ENCODE measurements at regions of chr15 and their contacts with region 1.

Region 1: DNA sequence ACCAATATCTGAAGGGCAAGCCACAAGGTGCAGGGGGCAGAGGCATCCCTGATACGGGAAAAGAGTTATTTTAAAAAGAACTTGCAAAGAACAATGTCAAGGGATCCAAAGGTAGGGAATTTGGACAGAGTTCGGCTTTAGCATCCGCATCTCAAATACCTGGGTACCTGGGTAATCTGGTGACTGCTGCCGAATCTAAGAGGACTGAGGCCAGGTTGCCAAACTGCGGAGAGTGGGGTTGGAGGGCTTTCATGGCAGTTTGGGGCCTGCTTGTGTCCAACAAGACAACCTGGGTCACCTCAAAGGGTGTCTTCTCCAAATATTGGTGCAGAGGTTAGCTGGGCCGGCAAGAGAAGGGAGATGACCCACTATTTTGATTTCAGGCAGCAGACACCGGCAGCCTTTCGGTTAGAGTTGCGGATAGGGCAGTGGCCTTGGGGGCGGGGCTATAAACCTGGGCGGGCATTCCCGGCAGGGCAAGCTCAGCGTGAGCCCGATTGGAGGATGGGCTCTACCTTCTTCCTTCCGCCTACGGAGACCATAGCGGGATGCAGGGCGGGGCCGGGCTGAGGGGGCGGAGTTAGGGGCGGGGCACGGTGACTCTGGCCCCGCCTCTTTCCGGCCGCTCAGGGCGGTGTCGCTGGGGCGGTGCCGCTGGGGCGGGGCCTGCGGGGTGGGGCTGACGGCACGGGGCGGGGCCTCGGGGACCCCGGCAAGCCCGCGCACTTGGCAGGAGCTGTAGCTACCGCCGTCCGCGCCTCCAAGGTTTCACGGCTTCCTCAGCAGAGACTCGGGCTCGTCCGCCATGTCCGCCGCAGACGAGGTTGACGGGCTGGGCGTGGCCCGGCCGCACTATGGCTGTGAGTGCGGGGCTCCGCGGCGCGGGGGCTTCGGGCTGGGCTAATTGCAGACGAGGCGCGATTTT is at the start of gene IQGAP1:
- DNase-seq: peak; percentile 92 to 97 (median 95)
- H3K4me3 ChIP-seq: peak within 1 kb of the TSS; percentile 70 to 85
- H3K4me3 Mint-ChIP-seq: peak within 1 kb of the TSS; percentile 89 to 96 (median 93)
- H3K27ac ChIP-seq: peak within 1 kb of the TSS; percentile 84
- H3K27ac Mint-ChIP-seq: peak within 1 kb of the TSS; percentile 93 to 98 (median 96)
- H3K4me1 ChIP-seq: peaks cover 42% of the 10 kb centered on the region
- H3K4me1 Mint-ChIP-seq: peaks cover 36 to 54% (median 48%) of the 10 kb centered on the region in 4 donors
- H3K27me3 ChIP-seq: no peaks in the 10 kb centered on the region
- H3K27me3 Mint-ChIP-seq: no peaks in the 10 kb centered on the region
- total RNA-seq, gene IQGAP1: 128 to 132 TPM

Region 2: DNA sequence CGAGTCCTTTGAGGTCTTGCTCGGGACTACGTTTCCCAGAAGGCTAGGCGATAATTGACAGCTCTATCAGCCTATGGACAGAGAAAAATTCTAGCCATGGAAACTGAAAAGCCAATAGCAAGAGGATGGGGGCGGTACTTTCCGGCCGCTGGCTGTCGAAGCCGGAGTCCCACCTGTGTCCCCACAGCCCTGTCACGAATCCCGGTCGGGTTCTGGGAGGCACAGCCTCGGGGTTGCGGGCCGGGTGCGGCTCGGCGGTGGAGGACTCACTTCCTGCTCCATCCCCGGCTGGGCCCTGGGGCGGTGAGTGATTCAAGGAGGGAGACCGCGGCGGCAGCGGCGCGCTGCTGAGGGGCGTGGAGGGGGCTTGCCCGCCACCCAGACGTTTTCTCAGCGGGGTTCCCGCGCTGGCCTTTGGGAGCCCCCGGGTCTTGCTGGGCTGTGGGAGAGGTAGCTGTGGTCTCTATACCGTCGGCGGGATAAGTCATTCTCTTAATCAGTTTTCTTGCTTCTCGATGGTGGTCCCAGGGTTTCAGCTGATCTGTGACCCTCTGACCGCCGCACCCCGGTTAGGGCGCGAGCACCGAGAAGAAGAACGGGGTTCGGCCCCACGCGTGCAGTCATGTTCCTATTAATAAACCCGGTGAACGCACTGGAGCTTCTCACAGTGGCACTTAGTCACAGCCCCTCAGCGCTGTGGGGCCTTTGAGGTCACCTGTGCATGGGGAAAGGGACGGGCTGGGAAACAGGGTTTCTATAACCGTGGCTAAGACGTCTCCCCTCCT is 35.5 kb before region 1 on chr15 and contains the start of gene ZNF774:
- CTCF ChIA-PET with region 1: no interaction called
- POLR2A ChIA-PET with region 1: interaction called, 5 read pairs
- intact Hi-C with region 1: loop called (anchors 5 kb)
- DNase-seq: peak; percentile 92 to 95 (median 94)
- H3K4me3 ChIP-seq: peak within 1 kb of the TSS; percentile 50 to 79
- H3K4me3 Mint-ChIP-seq: peak within 1 kb of the TSS; percentile 83 to 95 (median 90)
- H3K27ac ChIP-seq: peak within 1 kb of the TSS; percentile 18
- H3K27ac Mint-ChIP-seq: peak within 1 kb of the TSS; percentile 24 to 85 (median 75)
- H3K4me1 ChIP-seq: peaks cover 10% of the 10 kb centered on the region
- H3K4me1 Mint-ChIP-seq: peaks cover 8 to 20% (median 14%) of the 10 kb centered on the region in 4 donors
- H3K27me3 ChIP-seq: no peaks in the 10 kb centered on the region
- H3K27me3 Mint-ChIP-seq: peaks cover 0 to 1% of the 10 kb centered on the region in 2 donors
- total RNA-seq, gene ZNF774: 0.78 to 0.81 TPM

Region 3: GRCh38 chr15:90376789-90377188 is 11.0 kb before region 1 on chr15:
- CTCF ChIA-PET with region 1: interaction called, 6 read pairs
- POLR2A ChIA-PET with region 1: interaction called, 70 read pairs
- intact Hi-C with region 1: loop called (anchors 1 kb)
- DNase-seq: peak; percentile 78 to 83 (median 80)
- H3K4me3 ChIP-seq: peak overlapping the region in 1 of 2 donors; percentile 11
- H3K4me3 Mint-ChIP-seq: peak overlapping the region; percentile 58 to 86 (median 73)
- H3K27ac ChIP-seq: no peak overlapping the region
- H3K27ac Mint-ChIP-seq: peak overlapping the region; percentile 41 to 95 (median 65)
- H3K4me1 ChIP-seq: peaks cover 46% of the 10 kb centered on the region
- H3K4me1 Mint-ChIP-seq: peaks cover 21 to 53% (median 43%) of the 10 kb centered on the region in 4 donors
- H3K27me3 ChIP-seq: no peaks in the 10 kb centered on the region
- H3K27me3 Mint-ChIP-seq: no peaks in the 10 kb centered on the region

Region 4: GRCh38 chr15:90400406-90401314 is 12.9 kb after region 1 on chr15:
- CTCF ChIA-PET with region 1: interaction called, 15 read pairs
- POLR2A ChIA-PET with region 1: interaction called, 92 read pairs
- intact Hi-C with region 1: loop called (anchors 1 kb)
- DNase-seq: peak; percentile 79 to 91 (median 88)
- H3K4me3 ChIP-seq: peak overlapping the region in 1 of 2 donors; percentile 3
- H3K4me3 Mint-ChIP-seq: peak overlapping the region; percentile 75 to 88 (median 80)
- H3K27ac ChIP-seq: peak overlapping the region; percentile 93
- H3K27ac Mint-ChIP-seq: peak overlapping the region; percentile 97 to 100 (median 99)
- H3K4me1 ChIP-seq: peaks cover 72% of the 10 kb centered on the region
- H3K4me1 Mint-ChIP-seq: peaks cover 49 to 76% (median 60%) of the 10 kb centered on the region in 4 donors
- H3K27me3 ChIP-seq: no peaks in the 10 kb centered on the region
- H3K27me3 Mint-ChIP-seq: no peaks in the 10 kb centered on the region

Region 5: DNA sequence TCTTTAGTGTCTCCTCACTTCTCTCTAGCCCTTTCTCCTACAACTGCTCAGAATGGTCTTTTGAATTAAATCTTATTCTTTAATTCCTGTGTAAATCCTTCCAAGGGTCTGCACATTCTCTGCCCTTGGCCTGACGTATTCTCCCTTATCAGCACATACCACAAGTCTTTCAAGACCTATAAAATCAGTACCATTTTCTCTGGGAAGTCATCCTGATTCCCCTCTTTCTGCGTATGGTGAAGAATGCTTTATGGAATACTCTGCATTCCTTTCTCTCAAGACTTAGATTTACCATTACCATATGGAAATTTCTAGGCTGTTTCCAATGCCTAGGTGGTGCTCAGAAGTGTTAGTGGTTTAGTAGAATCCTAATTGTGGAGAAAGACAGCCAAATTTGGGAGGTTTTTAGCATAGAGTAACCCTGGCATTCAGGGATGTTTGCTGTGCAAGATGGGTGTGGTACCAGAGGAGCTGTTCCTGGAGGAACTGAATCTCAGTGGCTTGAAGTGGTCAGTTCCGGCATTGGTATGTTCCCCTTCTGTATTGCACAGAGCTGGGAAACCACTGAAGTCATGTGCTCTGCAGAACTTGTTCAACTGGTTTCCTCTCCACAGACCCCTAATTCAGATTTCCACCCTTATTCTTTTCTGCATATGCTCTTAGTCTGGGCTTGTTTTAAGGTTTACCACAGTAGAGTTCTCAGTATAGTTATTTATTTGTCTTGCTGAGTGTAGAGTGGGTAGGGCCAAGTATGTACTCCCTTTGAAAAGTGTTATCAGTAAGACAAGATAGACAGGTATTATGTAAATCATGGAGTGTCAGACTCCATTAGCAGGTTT is 24.8 kb after region 1 on chr15:
- CTCF ChIA-PET with region 1: no interaction called
- POLR2A ChIA-PET with region 1: interaction called, 12 read pairs
- intact Hi-C with region 1: no loop called
- DNase-seq: peak in 1 of 5 donors; percentile 32
- H3K4me3 ChIP-seq: no peak overlapping the region
- H3K4me3 Mint-ChIP-seq: peak overlapping the region in 6 of 8 donors; percentile 13 to 69 (median 52)
- H3K27ac ChIP-seq: no peak overlapping the region
- H3K27ac Mint-ChIP-seq: peak overlapping the region in 6 of 7 donors; percentile 36 to 81 (median 64)
- H3K4me1 ChIP-seq: peaks cover 57% of the 10 kb centered on the region
- H3K4me1 Mint-ChIP-seq: peaks cover 57 to 87% (median 72%) of the 10 kb centered on the region in 4 donors
- H3K27me3 ChIP-seq: no peaks in the 10 kb centered on the region
- H3K27me3 Mint-ChIP-seq: no peaks in the 10 kb centered on the region

Region 6: DNA sequence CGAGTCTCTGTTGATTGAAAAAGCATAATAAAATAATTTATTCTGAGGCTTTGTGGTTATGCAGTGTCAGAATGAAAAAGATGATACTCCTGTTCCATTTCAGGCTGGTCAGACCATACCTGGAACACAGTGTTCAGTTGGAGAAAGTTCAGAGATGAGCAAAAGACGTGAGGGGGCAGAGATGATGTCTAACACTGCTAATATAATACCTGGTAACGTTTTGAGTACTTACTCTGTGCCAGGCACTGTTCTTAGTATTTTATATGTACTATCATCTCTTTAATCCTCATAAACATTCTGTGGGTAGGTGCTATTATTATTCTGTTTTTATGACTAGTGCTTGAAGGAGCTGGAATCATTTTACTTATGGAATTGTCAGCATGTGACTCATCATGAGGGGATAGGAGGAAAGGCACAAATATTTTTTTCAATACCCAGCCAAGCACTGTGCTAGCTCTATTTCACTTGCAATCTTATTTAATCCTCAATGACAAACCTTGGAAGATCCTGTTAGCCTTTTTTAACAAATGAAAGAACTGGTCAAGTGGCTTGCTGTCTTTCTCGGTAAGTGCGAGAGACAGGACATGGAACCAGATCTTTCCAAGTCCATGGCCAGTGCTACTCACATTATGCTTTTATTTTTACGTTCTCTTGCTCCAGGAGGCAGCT is 32.1 kb after region 1 on chr15:
- CTCF ChIA-PET with region 1: no interaction called
- POLR2A ChIA-PET with region 1: interaction called, 14 read pairs
- intact Hi-C with region 1: no loop called
- DNase-seq: no peak
- H3K4me3 ChIP-seq: no peak overlapping the region
- H3K4me3 Mint-ChIP-seq: peak overlapping the region in 6 of 8 donors; percentile 1 to 64 (median 60)
- H3K27ac ChIP-seq: no peak overlapping the region
- H3K27ac Mint-ChIP-seq: peak overlapping the region in 6 of 7 donors; percentile 49 to 79 (median 70)
- H3K4me1 ChIP-seq: peaks cover 60% of the 10 kb centered on the region
- H3K4me1 Mint-ChIP-seq: peaks cover 44 to 83% (median 62%) of the 10 kb centered on the region in 4 donors
- H3K27me3 ChIP-seq: no peaks in the 10 kb centered on the region
- H3K27me3 Mint-ChIP-seq: no peaks in the 10 kb centered on the region

Measured in CD4-positive, alpha-beta memory T cell (primary cell).